ENCODE measurements at regions of chr1 and their contacts with region 1.

Region 1: DNA sequence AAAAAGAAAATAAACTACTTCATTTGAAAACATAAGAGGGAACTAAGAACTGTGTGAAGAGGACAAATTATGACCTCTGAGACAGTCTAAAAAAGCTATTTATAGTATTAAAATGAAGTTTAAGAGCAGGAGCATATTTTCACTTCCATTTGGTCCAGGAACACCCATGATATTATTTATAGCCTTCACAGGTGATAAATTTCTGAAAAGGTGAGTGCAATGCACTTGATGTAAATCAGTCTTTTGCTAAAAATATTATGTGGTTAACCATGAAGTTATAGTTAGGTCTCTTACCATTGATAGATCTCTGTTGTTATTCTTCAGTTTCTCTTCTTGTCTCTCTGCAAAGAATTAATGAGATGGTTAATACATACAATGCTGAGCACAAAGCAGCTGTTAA is 14.7 kb downstream of the TMCO1 start:
- DNase-seq: no peak
- H3K4me3 ChIP-seq: no peak overlapping the region
- H3K27ac ChIP-seq: no peak overlapping the region
- H3K4me1 ChIP-seq: peaks cover 11% of the 10 kb centered on the region
- H3K27me3 ChIP-seq: no peaks in the 10 kb centered on the region
- CTCF ChIP-seq: no peak
- POLR2A ChIP-seq: no peak

Region 2: GRCh38 chr1:165703648-165704047 is 50.3 kb before region 1 on chr1:
- intact Hi-C with region 1: loop called (anchors 5 kb)
- DNase-seq: no peak
- H3K4me3 ChIP-seq: no peak overlapping the region
- H3K27ac ChIP-seq: no peak overlapping the region
- H3K4me1 ChIP-seq: no peaks in the 10 kb centered on the region
- H3K27me3 ChIP-seq: no peaks in the 10 kb centered on the region
- CTCF ChIP-seq: no peak
- POLR2A ChIP-seq: no peak